Right lobe of liver (tissue), 6 donors: ENCODE measurements at regions of chr3 and their contacts with region 1.

Region 1: DNA sequence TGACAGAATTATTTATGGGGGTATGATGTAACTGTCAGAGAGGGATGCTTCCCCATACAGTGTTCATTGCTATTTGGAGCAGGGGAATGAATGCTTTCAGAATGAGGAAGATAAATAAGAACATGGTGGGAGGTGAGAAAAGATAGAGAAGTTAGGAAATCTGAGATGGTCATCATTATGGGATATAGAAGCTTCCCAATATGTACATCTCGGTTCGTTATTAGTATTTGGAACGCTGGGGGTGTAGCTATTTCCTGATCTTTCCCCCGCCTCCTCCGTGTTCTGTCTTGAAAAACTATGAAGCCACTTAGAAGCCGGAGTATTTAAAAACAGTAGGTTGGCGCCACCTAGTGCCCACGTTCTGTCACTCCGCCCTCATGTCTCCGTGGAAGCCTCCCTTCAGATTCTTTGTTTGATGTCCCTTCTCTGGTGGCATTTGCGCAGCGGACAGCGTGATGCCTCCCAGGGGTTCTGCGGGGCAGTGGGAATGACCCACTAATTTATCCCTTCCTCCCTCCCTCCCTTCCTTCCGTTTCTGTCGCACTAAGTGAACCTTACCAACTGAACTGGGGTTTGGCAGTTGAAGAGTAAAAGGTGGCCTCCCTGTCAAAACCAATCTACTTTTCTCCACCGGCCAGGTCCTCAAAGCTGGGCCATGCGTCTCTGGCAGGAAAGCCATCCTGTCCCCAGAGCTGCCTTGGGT is 184.5 kb downstream of the FEZF2 start:
- DNase-seq: peak; percentile 62 to 72 (median 67)
- ATAC-seq: peak; percentile 76 to 83 (median 80)
- H3K4me3 ChIP-seq: no peak overlapping the region
- H3K27ac ChIP-seq: no peak overlapping the region
- H3K4me1 ChIP-seq: peaks cover 0 to 19% (median 0%) of the 10 kb centered on the region in 4 donors
- H3K27me3 ChIP-seq: no peaks in the 10 kb centered on the region
- CTCF ChIP-seq: peak; percentile 68 to 87 (median 78)
- POLR2A ChIP-seq: no peak

Region 2: GRCh38 chr3:61561374-61562041 is 627.3 kb before region 1 on chr3 and contains the start of gene PTPRG:
- intact Hi-C with region 1: loop called in 1 of 2 experiments (anchors 5 kb)
- DNase-seq: peak; percentile 86 to 94 (median 91)
- ATAC-seq: peak; percentile 73 to 84 (median 79)
- H3K4me3 ChIP-seq: peak within 1 kb of the TSS; percentile 74 to 88 (median 86)
- H3K27ac ChIP-seq: peak within 1 kb of the TSS; percentile 77 to 92 (median 90)
- H3K4me1 ChIP-seq: peaks cover 0 to 20% (median 8%) of the 10 kb centered on the region in 4 donors
- H3K27me3 ChIP-seq: no peaks in the 10 kb centered on the region
- CTCF ChIP-seq: no peak
- POLR2A ChIP-seq: peak; percentile 84
- total RNA-seq, gene PTPRG: 11.7 to 27.8 (median 14.7) TPM

Region 3: DNA sequence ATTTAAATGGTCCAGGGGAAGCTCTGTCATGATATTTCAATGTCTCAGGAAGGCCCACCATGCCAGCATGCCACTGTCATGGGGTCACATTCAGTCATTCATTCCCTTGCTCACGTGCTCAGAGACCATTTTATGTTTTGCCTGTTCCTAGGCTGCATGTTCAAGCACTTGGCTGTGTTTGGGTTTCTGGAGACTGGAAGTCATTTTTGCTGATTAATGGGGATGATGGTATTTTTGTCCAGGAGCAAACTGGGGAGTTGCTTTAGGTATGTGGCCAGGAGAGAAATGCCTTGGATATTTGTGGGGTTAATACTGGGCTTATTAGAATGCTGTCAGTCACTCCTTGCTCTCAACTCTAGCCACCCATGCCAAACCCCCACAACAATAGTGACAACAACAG is 323.9 kb before region 1 on chr3:
- intact Hi-C with region 1: loop called in 1 of 2 experiments (anchors 10 kb)
- DNase-seq: no peak
- ATAC-seq: no peak
- H3K4me3 ChIP-seq: no peak overlapping the region
- H3K27ac ChIP-seq: no peak overlapping the region
- H3K4me1 ChIP-seq: no peaks in the 10 kb centered on the region
- H3K27me3 ChIP-seq: no peaks in the 10 kb centered on the region
- CTCF ChIP-seq: no peak
- POLR2A ChIP-seq: no peak

Region 4: DNA sequence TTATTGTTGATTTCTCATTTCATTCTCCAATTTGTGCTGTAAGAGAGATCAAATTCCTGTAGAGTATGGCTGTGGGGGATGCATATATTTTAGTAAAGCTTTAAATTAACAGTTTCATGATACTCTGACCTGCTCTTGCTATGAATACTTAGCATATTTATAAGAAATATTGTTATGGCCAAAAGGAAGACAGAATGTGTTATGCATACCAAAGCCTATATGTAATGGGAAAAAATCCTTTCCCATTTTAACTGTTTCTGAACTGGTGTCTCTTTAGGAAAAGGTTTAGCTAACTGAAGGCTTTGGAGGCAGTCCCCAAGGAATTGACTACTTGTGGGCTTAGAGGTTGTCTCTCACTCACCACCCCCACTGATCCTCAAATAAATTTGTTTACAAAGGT is 627.1 kb after region 1 on chr3:
- intact Hi-C with region 1: no loop called
- DNase-seq: no peak
- ATAC-seq: no peak
- H3K4me3 ChIP-seq: no peak overlapping the region
- H3K27ac ChIP-seq: no peak overlapping the region
- H3K4me1 ChIP-seq: no peaks in the 10 kb centered on the region
- H3K27me3 ChIP-seq: no peaks in the 10 kb centered on the region
- CTCF ChIP-seq: no peak
- POLR2A ChIP-seq: no peak